Sigmoid colon (tissue), 7 donors: ENCODE measurements at regions of chr16 and their contacts with region 1.

Region 1: GRCh38 chr16:5071681-5072333 is at the start of gene ALG1:
- DNase-seq: peak; percentile 95
- H3K4me3 ChIP-seq: peak within 1 kb of the TSS; percentile 58 to 81 (median 66)
- H3K27ac ChIP-seq: peak within 1 kb of the TSS; percentile 76 to 84 (median 78)
- H3K4me1 ChIP-seq: peaks cover 0 to 18% (median 13%) of the 10 kb centered on the region in 4 donors
- H3K27me3 ChIP-seq: no peaks in the 10 kb centered on the region
- CTCF ChIP-seq: no peak
- EP300 ChIP-seq: no peak
- POLR2A ChIP-seq: peak; percentile 59 to 75
- total RNA-seq, gene ALG1: 9.7 to 30.4 (median 14.3) TPM

Region 2: DNA sequence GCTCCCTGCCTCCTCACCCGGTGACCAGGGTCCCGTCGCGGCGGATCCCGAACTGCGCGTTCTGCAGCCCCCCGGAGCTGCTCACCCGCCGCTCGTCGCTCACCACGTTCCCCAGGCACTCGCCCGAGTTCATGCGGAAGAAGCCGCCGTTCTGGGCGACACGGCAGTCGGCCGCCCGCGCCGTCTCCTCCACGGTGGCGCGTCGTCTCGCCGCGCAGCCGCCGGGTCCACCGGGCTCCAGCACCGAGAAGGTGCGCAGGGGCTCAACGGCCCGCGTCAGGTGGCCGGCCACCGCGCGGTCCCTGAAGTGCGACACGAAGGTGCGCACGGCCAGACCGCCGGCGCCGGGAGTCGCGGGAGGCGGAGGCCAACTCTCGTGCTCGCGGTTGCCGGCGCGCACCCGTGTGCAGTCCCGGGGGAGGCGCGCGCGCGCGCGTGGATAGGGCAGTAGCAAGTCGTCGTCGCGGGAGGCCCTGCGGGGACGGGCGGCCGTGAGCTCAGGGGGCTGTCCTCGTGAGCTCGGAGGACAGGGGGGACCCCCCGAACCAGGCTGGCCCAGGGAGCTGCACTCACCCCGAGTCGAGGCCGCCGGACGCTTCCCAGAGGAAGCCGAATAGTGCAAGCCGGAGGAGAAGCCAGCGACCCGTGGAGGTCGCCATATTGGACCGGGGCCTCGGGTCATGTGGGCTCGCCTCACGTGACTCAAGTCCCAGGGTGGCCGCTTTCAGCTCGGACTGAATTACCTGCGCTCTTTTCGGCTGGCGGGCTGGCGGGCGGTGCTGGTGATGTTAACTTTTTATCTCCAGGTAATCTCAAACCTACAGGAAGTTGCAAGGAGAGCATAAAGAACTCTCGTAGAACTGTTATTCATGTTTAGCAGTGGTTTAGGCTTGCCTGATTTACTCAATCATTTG is 38.3 kb before region 1 on chr16 and contains the start of gene NAGPA:
- intact Hi-C with region 1: loop called (anchors 5 kb)
- DNase-seq: peak; percentile 95
- H3K4me3 ChIP-seq: peak within 1 kb of the TSS; percentile 79 to 95 (median 81)
- H3K27ac ChIP-seq: peak within 1 kb of the TSS; percentile 64 to 75 (median 64)
- H3K4me1 ChIP-seq: peaks cover 0 to 21% (median 16%) of the 10 kb centered on the region in 4 donors
- H3K27me3 ChIP-seq: no peaks in the 10 kb centered on the region
- CTCF ChIP-seq: no peak
- EP300 ChIP-seq: no peak
- POLR2A ChIP-seq: peak in 1 of 2 donors; percentile 23
- total RNA-seq, gene NAGPA: 11.7 to 30.7 (median 17.1) TPM